ENCODE measurements at regions of chr22 and their contacts with region 1.

Region 1: GRCh38 chr22:33116872-33117547 is 58.8 kb upstream of the SYN3 start:
- DNase-seq: no peak
- H3K4me3 ChIP-seq: no peak overlapping the region
- CTCF ChIP-seq: no peak

Region 2: DNA sequence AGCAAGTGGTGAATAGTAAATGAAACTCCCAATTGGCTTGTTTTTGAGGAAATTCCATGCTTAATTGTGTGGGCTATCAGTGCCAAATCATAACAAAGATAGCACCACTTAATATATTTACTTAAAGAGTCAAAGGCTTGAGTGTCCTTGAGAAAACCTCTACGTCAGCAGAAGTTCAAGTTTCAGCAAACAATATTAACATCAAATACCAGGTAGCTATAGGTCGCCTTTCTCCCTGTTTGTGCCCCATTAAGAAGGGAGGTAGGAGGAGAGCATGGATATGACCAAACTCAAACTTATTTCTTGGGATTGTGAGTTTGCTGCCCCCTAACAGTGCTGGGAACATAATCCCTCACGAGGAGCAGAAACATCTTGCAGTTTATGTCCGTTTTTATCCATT is 46.8 kb after region 1 on chr22:
- in situ Hi-C with region 1: no loop called
- DNase-seq: no peak
- H3K4me3 ChIP-seq: no peak overlapping the region
- CTCF ChIP-seq: no peak

Region 3: DNA sequence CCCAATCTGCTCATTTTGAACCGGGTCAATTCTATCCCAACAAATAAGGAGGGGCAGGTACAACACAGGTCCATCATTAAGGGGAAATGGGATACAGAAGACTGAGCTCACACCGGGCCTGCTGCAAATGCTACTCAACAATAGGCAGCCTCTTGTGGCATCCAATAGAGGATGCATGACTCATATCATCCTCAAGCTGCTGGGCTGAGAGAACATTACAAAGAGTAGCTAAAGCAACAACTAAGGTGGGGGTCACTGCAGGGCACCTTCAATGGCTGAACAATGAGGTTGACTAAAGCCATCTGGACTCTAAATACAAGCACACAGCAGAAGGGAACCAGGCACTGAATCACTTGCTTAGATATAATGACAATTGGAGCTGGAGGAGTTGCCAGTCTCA is 71.3 kb after region 1 on chr22:
- in situ Hi-C with region 1: no loop called
- DNase-seq: no peak
- H3K4me3 ChIP-seq: no peak overlapping the region
- CTCF ChIP-seq: no peak

Region 4: DNA sequence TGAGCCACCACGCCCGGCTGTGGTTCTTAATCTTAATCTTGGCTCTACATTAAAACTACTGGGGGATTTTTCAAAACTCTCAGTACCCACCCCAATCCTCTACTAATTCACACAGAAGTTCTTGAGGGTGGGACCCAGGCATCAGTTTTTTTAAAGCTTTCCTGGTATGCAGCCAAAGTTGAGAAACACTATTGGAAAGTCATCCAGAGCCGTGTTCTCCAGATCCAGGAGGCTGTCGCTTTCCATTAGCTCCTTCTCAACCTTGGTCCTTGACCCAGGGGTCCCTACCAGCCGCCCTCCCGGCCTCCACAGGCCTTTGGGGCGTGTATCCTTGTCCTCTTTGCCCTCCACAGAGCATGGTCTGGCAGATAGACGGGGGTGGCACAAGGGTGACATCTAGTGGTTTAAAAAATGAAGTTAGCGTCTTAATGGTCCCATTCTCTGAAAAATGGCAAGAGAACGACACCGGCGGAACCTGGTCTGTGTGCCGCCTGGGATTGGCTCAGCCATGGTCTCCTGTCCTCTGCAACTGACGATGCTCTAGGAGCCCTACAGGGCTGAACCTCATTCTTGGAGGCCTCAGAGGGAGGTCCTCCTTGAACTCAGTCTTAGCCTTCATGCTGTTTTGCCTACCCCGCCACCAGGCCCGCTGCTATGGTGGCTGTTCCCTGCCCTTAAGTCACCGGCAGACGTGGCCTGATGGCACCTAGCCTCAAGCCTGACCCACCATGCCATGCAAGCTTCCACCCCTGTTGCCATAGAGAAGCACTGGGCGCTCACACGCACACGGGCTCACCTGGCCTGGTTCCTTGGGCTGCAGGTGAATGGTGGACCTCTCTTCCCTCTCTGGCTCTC is 93.1 kb after region 1 on chr22:
- in situ Hi-C with region 1: loop called (anchors 5 kb)
- DNase-seq: no peak
- H3K4me3 ChIP-seq: no peak overlapping the region
- CTCF ChIP-seq: peak; percentile 62

Measured in astrocyte of the cerebellum (primary cell).